Prostate gland (tissue), 2 donors: ENCODE measurements at regions of chr9 and their contacts with region 1.

Region 1: DNA sequence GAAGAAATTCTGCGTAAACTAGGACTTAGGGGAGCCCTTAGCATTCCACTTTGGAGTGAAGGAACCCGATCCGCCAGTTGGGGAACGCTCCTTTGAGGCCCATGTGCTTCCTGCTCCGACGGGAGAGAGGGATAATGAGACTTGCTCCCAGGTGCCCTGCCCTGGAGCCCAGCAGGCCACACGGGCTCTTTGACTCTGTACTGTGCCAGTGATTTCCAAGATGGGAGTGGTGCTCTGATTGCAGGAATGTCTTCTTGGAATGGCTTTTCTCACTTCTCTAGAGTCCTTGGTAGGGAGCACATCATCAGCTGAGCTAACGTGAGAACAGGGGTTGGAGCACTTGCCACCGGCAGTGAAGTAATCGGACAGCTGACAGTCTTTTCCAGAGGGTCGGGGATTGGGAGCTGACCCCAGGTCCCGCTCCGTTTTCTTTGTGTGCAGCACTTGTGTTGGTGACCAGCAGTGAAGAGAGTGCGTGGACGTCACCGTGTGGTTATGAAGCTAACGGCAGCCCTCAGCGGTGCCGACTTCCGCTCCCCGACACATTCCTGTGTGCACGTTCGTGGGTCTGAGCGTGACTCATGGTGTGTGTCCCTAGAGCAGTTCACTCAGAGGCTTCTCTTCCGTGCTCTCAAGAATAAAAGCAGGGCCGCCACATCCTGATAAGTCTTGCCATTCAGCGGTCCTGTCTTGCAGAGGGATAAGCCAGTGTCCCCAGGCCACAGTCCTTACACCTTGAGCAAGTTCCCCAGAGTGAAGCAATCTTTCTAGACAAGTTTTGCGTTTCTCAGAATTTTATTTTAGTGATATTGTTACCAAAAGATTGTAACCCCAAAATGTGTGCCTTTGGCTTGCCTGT is 25.6 kb downstream of the ABL1 start:
- DNase-seq: no peak
- H3K4me3 ChIP-seq: no peak overlapping the region
- H3K27ac ChIP-seq: peak overlapping the region; percentile 14 to 41
- H3K4me1 ChIP-seq: no peaks in the 10 kb centered on the region
- H3K27me3 ChIP-seq: no peaks in the 10 kb centered on the region
- CTCF ChIP-seq: peak in 3 of 4 experiments; percentile 14 to 47 (median 43)
- POLR2A ChIP-seq: no peak

Region 2: GRCh38 chr9:130712564-130713285 is 148.0 kb before region 1 on chr9:
- intact Hi-C with region 1: loop called (anchors 2 kb)
- DNase-seq: peak; percentile 99
- H3K4me3 ChIP-seq: peak overlapping the region; percentile 83 to 99
- H3K27ac ChIP-seq: peak overlapping the region; percentile 99
- H3K4me1 ChIP-seq: no peaks in the 10 kb centered on the region
- H3K27me3 ChIP-seq: no peaks in the 10 kb centered on the region
- CTCF ChIP-seq: no peak
- POLR2A ChIP-seq: peak; percentile 80